MCF 10A (cell line): ENCODE measurements at regions of chr1 and their contacts with region 1.

Region 1: DNA sequence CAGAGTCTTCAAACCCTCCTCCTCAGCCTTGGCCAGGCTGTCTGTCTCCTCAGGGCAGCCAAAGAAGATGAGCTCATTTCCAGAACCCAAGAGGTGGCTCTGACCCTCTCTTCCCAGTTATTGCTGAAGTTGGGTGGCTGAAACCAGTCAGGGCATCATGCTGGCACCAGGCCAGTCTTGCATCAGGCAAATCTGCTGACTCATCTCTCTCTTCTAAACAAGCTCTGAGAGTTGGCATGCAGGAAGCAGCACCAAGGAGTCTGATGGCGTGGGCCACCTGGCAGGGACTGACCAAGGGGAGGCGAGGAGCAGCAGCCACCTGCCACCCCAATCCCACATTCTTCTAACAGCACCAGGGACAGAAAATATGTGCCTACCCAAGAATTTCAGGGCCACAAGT is 104.8 kb upstream of the ATP1A1 start:
- DNase-seq: peak; percentile 98
- H3K4me3 Mint-ChIP-seq: no peak overlapping the region
- H3K27ac Mint-ChIP-seq: peak overlapping the region; percentile 47
- H3K4me1 Mint-ChIP-seq: peaks cover 18% of the 10 kb centered on the region
- H3K27me3 Mint-ChIP-seq: no peaks in the 10 kb centered on the region
- CTCF ChIP-seq: no peak

Region 2: GRCh38 chr1:115423776-115424175 is 844.4 kb before region 1 on chr1:
- CTCF ChIA-PET with region 1: no interaction called
- POLR2A ChIA-PET with region 1: no interaction called
- intact Hi-C with region 1: no loop called
- DNase-seq: no peak
- H3K4me3 Mint-ChIP-seq: no peak overlapping the region
- H3K27ac Mint-ChIP-seq: no peak overlapping the region
- H3K4me1 Mint-ChIP-seq: peaks cover 5% of the 10 kb centered on the region
- H3K27me3 Mint-ChIP-seq: no peaks in the 10 kb centered on the region
- CTCF ChIP-seq: no peak

Region 3: DNA sequence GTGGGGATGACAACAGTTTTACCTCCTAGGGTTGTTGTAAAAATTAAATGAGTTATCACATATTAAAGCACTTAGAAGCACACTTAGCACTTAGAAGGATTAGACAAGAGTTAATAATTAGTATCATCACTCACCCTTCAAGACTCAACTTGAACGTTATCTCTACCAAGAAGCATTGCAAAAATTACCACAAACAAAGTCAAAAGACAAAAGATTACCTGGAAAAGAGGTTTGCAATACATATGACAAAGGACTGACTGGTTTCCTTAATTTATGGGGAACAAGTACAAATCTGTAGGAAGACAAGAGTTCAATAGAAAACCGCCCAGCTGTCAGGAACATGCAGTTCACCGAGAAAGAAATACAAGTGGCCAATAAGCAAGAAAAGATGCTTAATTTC is 11.5 kb after region 1 on chr1:
- CTCF ChIA-PET with region 1: interaction called, 5 read pairs
- POLR2A ChIA-PET with region 1: interaction called, 16 read pairs
- intact Hi-C with region 1: no loop called
- DNase-seq: no peak
- H3K4me3 Mint-ChIP-seq: no peak overlapping the region
- H3K27ac Mint-ChIP-seq: no peak overlapping the region
- H3K4me1 Mint-ChIP-seq: no peaks in the 10 kb centered on the region
- H3K27me3 Mint-ChIP-seq: no peaks in the 10 kb centered on the region
- CTCF ChIP-seq: no peak

Region 4: DNA sequence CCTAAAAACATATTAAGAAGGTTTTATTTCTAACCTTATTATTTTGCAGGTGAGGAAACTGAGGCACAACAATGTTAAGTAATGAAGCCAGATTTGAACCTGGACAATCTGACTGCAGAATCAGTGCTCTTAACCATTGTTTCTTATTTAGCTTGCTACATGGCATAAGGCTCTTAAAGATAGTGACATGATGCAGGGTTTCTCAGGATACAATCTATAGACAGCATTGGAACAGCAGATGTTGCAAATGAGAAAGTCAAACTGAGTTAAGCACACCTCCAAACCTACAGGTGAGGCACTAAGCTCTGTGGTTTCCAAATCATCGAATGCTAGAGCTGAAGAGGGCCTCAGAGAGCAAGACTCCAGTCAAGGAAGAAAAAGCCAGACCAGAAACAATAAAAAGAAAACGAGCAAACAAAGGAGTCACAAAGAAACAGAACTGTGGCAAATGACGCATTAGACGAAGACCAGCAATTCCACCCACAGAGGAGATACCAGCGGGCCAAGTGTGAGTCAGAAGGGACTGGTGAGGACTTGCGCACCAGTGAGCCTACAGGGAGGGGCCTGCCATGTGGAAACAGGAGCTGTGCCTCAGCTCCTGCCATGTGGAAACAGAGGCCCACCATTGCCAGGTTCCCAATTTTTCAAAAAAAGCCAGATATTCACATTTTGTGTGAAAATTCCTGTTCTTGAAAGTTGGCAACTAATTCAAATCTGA is 288.2 kb after region 1 on chr1:
- CTCF ChIA-PET with region 1: no interaction called
- POLR2A ChIA-PET with region 1: no interaction called
- intact Hi-C with region 1: no loop called
- DNase-seq: peak; percentile 99
- H3K4me3 Mint-ChIP-seq: peak overlapping the region; percentile 11
- H3K27ac Mint-ChIP-seq: peak overlapping the region; percentile 84
- H3K4me1 Mint-ChIP-seq: peaks cover 25% of the 10 kb centered on the region
- H3K27me3 Mint-ChIP-seq: no peaks in the 10 kb centered on the region
- CTCF ChIP-seq: no peak

Region 5: GRCh38 chr1:116737020-116737854 is 469.0 kb after region 1 on chr1:
- CTCF ChIA-PET with region 1: no interaction called
- POLR2A ChIA-PET with region 1: no interaction called
- intact Hi-C with region 1: no loop called
- DNase-seq: peak; percentile 60
- H3K4me3 Mint-ChIP-seq: no peak overlapping the region
- H3K27ac Mint-ChIP-seq: no peak overlapping the region
- H3K4me1 Mint-ChIP-seq: no peaks in the 10 kb centered on the region
- H3K27me3 Mint-ChIP-seq: peaks cover 11% of the 10 kb centered on the region
- CTCF ChIP-seq: peak; percentile 87